GM10248 (cell line): ENCODE measurements at regions of chr1 and their contacts with region 1.

Region 1: GRCh38 chr1:58652651-58653184 is 47.1 kb downstream of the MYSM1 start:
- DNase-seq: peak; percentile 65
- CTCF ChIP-seq: peak; percentile 67

Region 2: DNA sequence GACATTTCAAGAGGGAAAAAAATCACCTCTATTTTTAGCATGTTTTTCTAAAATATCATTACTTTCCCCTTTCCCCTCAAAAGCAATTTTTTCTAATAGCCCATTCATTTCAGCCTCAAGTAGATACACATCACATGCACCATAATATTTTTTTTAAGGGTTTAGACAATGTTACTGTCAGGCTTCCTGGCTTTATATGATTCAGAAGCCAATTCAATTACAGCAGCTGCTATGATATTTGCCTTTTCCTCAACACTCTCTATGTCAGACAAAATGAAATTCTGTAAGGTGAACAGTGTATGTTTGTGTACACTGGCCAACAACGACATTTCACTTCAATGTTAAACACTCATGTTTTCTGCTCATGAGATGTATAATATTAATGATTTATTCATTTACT is 152.7 kb before region 1 on chr1:
- CTCF ChIA-PET with region 1: interaction called, 10 read pairs
- POLR2A ChIA-PET with region 1: no interaction called
- DNase-seq: no peak
- CTCF ChIP-seq: no peak

Region 3: GRCh38 chr1:58528518-58528917 is 124.2 kb before region 1 on chr1:
- CTCF ChIA-PET with region 1: interaction called, 11 read pairs
- POLR2A ChIA-PET with region 1: no interaction called
- DNase-seq: no peak
- CTCF ChIP-seq: no peak

Region 4: DNA sequence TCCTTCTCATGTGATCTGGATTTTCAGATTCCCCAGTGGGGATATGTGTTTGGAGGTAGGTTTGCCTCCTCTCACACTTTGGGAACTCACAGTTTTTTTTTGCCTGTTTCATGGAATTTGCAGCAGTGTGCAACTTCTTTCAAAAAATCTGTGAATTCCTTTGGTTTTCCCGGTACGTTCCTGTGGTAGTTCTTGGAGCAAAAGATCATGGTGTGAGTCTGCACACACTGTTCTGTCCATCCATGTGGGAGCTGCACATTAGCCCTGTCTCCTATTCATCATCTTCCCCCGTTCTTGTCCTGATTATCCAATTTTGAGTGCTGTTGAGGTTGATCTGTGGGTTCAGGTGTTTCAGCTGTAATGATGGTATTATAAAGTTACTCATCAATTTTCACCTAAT is 45.3 kb before region 1 on chr1:
- CTCF ChIA-PET with region 1: interaction called, 15 read pairs
- POLR2A ChIA-PET with region 1: no interaction called
- DNase-seq: no peak
- CTCF ChIP-seq: no peak

Region 5: GRCh38 chr1:58670181-58670580 is 17.5 kb after region 1 on chr1:
- CTCF ChIA-PET with region 1: interaction called, 13 read pairs
- POLR2A ChIA-PET with region 1: no interaction called
- DNase-seq: no peak
- CTCF ChIP-seq: no peak